OCI-LY7 (cell line): ENCODE measurements at regions of chr5 and their contacts with region 1.

Region 1: DNA sequence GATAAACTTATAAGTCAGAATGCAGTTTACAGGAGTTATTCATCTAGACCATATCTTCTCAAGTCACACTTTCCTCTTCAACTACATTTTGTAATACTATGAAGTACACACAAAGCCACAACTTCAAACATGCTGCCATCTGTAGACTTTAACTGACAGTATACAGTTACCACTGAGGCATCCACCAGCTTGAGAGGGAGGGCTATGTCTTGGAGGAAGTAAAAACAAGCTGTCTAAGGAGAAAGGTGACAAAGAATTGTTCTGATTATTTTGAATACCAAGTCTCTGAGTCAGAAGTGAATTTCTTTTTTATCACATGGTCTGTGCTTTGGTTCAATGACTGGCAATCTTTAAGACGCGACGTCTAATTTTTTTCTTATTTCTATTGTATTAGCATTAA is 97.6 kb upstream of the CDH10 start:
- DNase-seq: no peak
- H3K4me3 ChIP-seq: no peak overlapping the region
- H3K27ac ChIP-seq: no peak overlapping the region
- H3K4me1 ChIP-seq: no peaks in the 10 kb centered on the region
- CTCF ChIP-seq: no peak

Region 2: DNA sequence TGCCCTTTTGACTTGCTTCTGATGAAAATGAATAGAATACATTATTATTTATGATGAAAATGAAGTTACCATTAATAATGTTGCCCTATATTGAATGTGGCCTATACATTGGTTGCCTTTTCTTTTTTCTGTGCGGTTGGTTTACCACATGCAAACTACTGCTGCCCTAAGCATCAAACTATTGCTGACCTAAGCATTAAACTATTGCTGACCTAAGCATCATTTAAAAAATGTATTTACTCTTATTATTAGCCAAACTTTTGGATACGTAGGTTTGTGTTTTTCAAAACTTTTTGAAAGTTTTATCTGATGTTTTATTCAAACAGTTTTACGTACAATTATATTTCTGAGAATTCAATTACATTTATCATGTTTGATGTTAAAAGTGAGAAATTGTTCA is 21.6 kb before region 1 on chr5:
- CTCF ChIA-PET with region 1: no interaction called
- POLR2A ChIA-PET with region 1: no interaction called
- intact Hi-C with region 1: loop called (anchors 1 kb)
- DNase-seq: no peak
- H3K4me3 ChIP-seq: no peak overlapping the region
- H3K27ac ChIP-seq: no peak overlapping the region
- H3K4me1 ChIP-seq: no peaks in the 10 kb centered on the region
- CTCF ChIP-seq: no peak